Left ventricle myocardium superior (tissue), 1 donor: ENCODE measurements at regions of chr19 and their contacts with region 1.

Region 1: GRCh38 chr19:47436712-47437401 is 17.5 kb upstream of the MEIS3 start:
- DNase-seq: peak; percentile 84
- ATAC-seq: peak; percentile 97

Region 2: GRCh38 chr19:47215581-47215980 is 221.3 kb before region 1 on chr19:
- intact Hi-C with region 1: no loop called
- DNase-seq: no peak
- ATAC-seq: no peak

Region 3: GRCh38 chr19:47707135-47707925 is 270.5 kb after region 1 on chr19:
- intact Hi-C with region 1: loop called (anchors 5 kb)
- DNase-seq: peak; percentile 78
- ATAC-seq: peak; percentile 85